PC-9 (cell line): ENCODE measurements at regions of chr2 and their contacts with region 1.

Region 1: DNA sequence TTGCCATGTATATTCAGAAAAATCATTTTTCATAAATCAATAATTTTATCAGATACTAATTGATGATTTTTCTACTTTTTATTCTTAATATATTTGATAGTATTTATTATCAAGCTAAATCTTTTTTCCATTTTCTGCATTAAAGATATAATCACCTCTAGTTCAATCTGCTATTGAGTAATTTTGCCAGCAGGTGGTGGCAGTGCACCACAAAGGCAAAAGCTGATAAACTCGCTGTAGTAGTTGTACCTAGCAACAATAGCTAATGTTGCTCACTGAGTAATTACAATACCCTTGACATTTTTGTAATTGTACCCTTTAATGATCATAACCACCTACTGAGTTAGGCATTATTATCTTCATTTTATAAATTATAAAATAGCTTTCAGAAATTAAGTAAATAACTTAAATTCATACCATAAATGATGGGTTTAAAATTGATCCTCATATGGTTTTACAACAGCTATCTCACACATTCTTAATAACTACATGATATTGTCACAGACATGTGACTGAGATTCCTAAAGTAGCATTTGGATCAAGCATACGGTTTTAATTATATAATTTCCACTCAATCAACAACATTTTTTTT is 52.0 kb upstream of the CALCRL start:
- DNase-seq: peak in 1 of 2 experiments; percentile 40
- H3K4me3 ChIP-seq: no peak overlapping the region
- H3K27ac ChIP-seq: no peak overlapping the region
- H3K4me1 ChIP-seq: no peaks in the 10 kb centered on the region
- H3K27me3 ChIP-seq: no peaks in the 10 kb centered on the region
- CTCF ChIP-seq: peak; percentile 82

Region 2: GRCh38 chr2:187547353-187547979 is 47.4 kb after region 1 on chr2:
- CTCF ChIA-PET with region 1: interaction called, 3 read pairs
- POLR2A ChIA-PET with region 1: no interaction called
- intact Hi-C with region 1: loop called (anchors 2 kb)
- DNase-seq: peak; percentile 42 to 66
- H3K4me3 ChIP-seq: no peak overlapping the region
- H3K27ac ChIP-seq: 0 out of 2 replicates have a peak overlapping the region, but pooled peaks have one; percentile 23
- H3K4me1 ChIP-seq: no peaks in the 10 kb centered on the region
- H3K27me3 ChIP-seq: no peaks in the 10 kb centered on the region
- CTCF ChIP-seq: no peak

Region 3: GRCh38 chr2:187842978-187843847 is 343.2 kb after region 1 on chr2:
- CTCF ChIA-PET with region 1: no interaction called
- POLR2A ChIA-PET with region 1: no interaction called
- intact Hi-C with region 1: loop called (anchors 1 kb)
- DNase-seq: peak in 1 of 2 experiments; percentile 0
- H3K4me3 ChIP-seq: no peak overlapping the region
- H3K27ac ChIP-seq: no peak overlapping the region
- H3K4me1 ChIP-seq: no peaks in the 10 kb centered on the region
- H3K27me3 ChIP-seq: no peaks in the 10 kb centered on the region
- CTCF ChIP-seq: peak; percentile 70

Region 4: GRCh38 chr2:188291617-188292347 is 791.7 kb after region 1 on chr2 and contains the start of gene GULP1:
- CTCF ChIA-PET with region 1: no interaction called
- POLR2A ChIA-PET with region 1: no interaction called
- intact Hi-C with region 1: loop called (anchors 10 kb)
- DNase-seq: peak; percentile 53 to 59
- H3K4me3 ChIP-seq: peak within 1 kb of the TSS; percentile 83
- H3K27ac ChIP-seq: peak within 1 kb of the TSS; percentile 80
- H3K4me1 ChIP-seq: peaks cover 22% of the 10 kb centered on the region
- H3K27me3 ChIP-seq: no peaks in the 10 kb centered on the region
- CTCF ChIP-seq: peak; percentile 57; the same call in 1 of the 2 replicates
- total RNA-seq, gene GULP1: 31.5 and 38.0 TPM in 2 replicates

Region 5: GRCh38 chr2:188512456-188512855 is 1012.4 kb after region 1 on chr2:
- CTCF ChIA-PET with region 1: no interaction called
- POLR2A ChIA-PET with region 1: no interaction called
- intact Hi-C with region 1: loop called (anchors 2 kb)
- DNase-seq: no peak
- H3K4me3 ChIP-seq: no peak overlapping the region
- H3K27ac ChIP-seq: no peak overlapping the region
- H3K4me1 ChIP-seq: no peaks in the 10 kb centered on the region
- H3K27me3 ChIP-seq: no peaks in the 10 kb centered on the region
- CTCF ChIP-seq: peak; percentile 74

Region 6: GRCh38 chr2:189171956-189172609 is 1672.0 kb after region 1 on chr2:
- CTCF ChIA-PET with region 1: no interaction called
- POLR2A ChIA-PET with region 1: no interaction called
- intact Hi-C with region 1: no loop called
- DNase-seq: no peak
- H3K4me3 ChIP-seq: no peak overlapping the region
- H3K27ac ChIP-seq: no peak overlapping the region
- H3K4me1 ChIP-seq: no peaks in the 10 kb centered on the region
- H3K27me3 ChIP-seq: no peaks in the 10 kb centered on the region
- CTCF ChIP-seq: no peak